Right lobe of liver (tissue), 6 donors: ENCODE measurements at regions of chr18 and their contacts with region 1.

Region 1: DNA sequence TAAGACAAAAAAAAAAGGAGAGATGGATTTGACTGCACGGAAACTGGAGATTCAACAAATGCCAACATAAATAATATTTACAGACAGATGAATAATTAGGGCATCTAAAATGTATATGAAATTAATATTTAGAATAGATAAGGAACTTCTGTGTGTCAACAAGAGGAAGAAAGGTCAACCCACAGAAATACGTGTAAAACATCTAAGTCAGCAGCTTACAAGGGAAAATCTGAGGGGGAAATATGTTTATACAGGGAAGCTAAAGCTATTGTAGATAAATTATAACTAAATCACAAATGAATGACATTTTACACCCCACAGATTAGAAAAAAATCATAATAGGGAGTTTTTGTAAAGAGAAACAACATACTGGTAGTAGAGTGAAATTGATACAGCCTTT is 159.9 kb downstream of the PIEZO2 start:
- DNase-seq: no peak
- ATAC-seq: no peak
- H3K4me3 ChIP-seq: no peak overlapping the region
- H3K27ac ChIP-seq: no peak overlapping the region
- H3K4me1 ChIP-seq: no peaks in the 10 kb centered on the region
- H3K27me3 ChIP-seq: no peaks in the 10 kb centered on the region
- CTCF ChIP-seq: no peak
- POLR2A ChIP-seq: no peak

Region 2: GRCh38 chr18:11040823-11041656 is 51.6 kb after region 1 on chr18:
- intact Hi-C with region 1: loop called in 1 of 2 experiments (anchors 10 kb)
- DNase-seq: peak in 1 of 3 donors; percentile 73
- ATAC-seq: peak; percentile 88 to 91 (median 89)
- H3K4me3 ChIP-seq: no peak overlapping the region
- H3K27ac ChIP-seq: no peak overlapping the region
- H3K4me1 ChIP-seq: peaks cover 0 to 7% (median 2%) of the 10 kb centered on the region in 4 donors
- H3K27me3 ChIP-seq: no peaks in the 10 kb centered on the region
- CTCF ChIP-seq: peak; percentile 72 to 83 (median 77)
- POLR2A ChIP-seq: no peak